ENCODE measurements at regions of chr16 and their contacts with region 1.

Region 1: GRCh38 chr16:71723537-71724319 is 773 bp downstream of the PHLPP2 start:
- DNase-seq: peak; percentile 81 to 93 (median 88)
- ATAC-seq: peak; percentile 93
- H3K4me3 ChIP-seq: peak overlapping the region; percentile 79
- H3K4me3 Mint-ChIP-seq: peak overlapping the region; percentile 80 to 97 (median 86)
- H3K27ac ChIP-seq: peak overlapping the region; percentile 79
- H3K27ac Mint-ChIP-seq: peak overlapping the region in 8 of 9 donors; percentile 30 to 92 (median 78)
- H3K4me1 ChIP-seq: peaks cover 9% of the 10 kb centered on the region in 2 donors
- H3K4me1 Mint-ChIP-seq: peaks cover 7 to 20% (median 19%) of the 10 kb centered on the region in 7 donors
- H3K27me3 ChIP-seq: no peaks in the 10 kb centered on the region
- H3K27me3 Mint-ChIP-seq: peaks cover 0 to 17% (median 0%) of the 10 kb centered on the region in 5 donors

Region 2: GRCh38 chr16:70800781-70801530 is 922.8 kb before region 1 on chr16 and contains the start of gene VAC14:
- CTCF ChIA-PET with region 1: no interaction called
- POLR2A ChIA-PET with region 1: no interaction called
- intact Hi-C with region 1: loop called in 1 of 2 experiments (anchors 5 kb)
- DNase-seq: peak; percentile 96 to 99 (median 97)
- ATAC-seq: peak; percentile 99
- H3K4me3 ChIP-seq: peak within 1 kb of the TSS; percentile 90
- H3K4me3 Mint-ChIP-seq: peak within 1 kb of the TSS; percentile 90 to 98 (median 94)
- H3K27ac ChIP-seq: peak within 1 kb of the TSS; percentile 78
- H3K27ac Mint-ChIP-seq: peak within 1 kb of the TSS; percentile 84 to 95 (median 92)
- H3K4me1 ChIP-seq: peaks cover 11 to 17% of the 10 kb centered on the region in 2 donors
- H3K4me1 Mint-ChIP-seq: peaks cover 19 to 49% (median 44%) of the 10 kb centered on the region in 7 donors
- H3K27me3 ChIP-seq: no peaks in the 10 kb centered on the region
- H3K27me3 Mint-ChIP-seq: peaks cover 0 to 15% (median 0%) of the 10 kb centered on the region in 5 donors
- total RNA-seq, gene VAC14: 36.7 to 47.1 (median 45.9) TPM

Region 3: GRCh38 chr16:71461686-71462648 is 261.8 kb before region 1 on chr16 and contains the start of gene ZNF23:
- CTCF ChIA-PET with region 1: no interaction called
- POLR2A ChIA-PET with region 1: no interaction called
- intact Hi-C with region 1: loop called in 1 of 2 experiments (anchors 10 kb)
- DNase-seq: peak; percentile 53 to 84 (median 72)
- ATAC-seq: peak; percentile 99
- H3K4me3 ChIP-seq: peak within 1 kb of the TSS; percentile 92
- H3K4me3 Mint-ChIP-seq: peak within 1 kb of the TSS; percentile 88 to 97 (median 94)
- H3K27ac ChIP-seq: peak within 1 kb of the TSS; percentile 87
- H3K27ac Mint-ChIP-seq: peak within 1 kb of the TSS; percentile 85 to 98 (median 92)
- H3K4me1 ChIP-seq: peaks cover 4 to 6% of the 10 kb centered on the region in 2 donors
- H3K4me1 Mint-ChIP-seq: peaks cover 13 to 39% (median 27%) of the 10 kb centered on the region in 7 donors
- H3K27me3 ChIP-seq: no peaks in the 10 kb centered on the region
- H3K27me3 Mint-ChIP-seq: no peaks in the 10 kb centered on the region
- total RNA-seq, gene ZNF23: 6.5 to 16.0 (median 8.8) TPM

Region 4: GRCh38 chr16:71526111-71526631 is 197.6 kb before region 1 on chr16 and contains the start of gene CHST4:
- CTCF ChIA-PET with region 1: no interaction called
- POLR2A ChIA-PET with region 1: no interaction called
- intact Hi-C with region 1: no loop called
- DNase-seq: no peak
- ATAC-seq: no peak
- H3K4me3 ChIP-seq: no peak within 1 kb of the TSS
- H3K4me3 Mint-ChIP-seq: no peak within 1 kb of the TSS
- H3K27ac ChIP-seq: no peak within 1 kb of the TSS
- H3K27ac Mint-ChIP-seq: no peak within 1 kb of the TSS
- H3K4me1 ChIP-seq: no peaks in the 10 kb centered on the region
- H3K4me1 Mint-ChIP-seq: no peaks in the 10 kb centered on the region
- H3K27me3 ChIP-seq: no peaks in the 10 kb centered on the region
- H3K27me3 Mint-ChIP-seq: peaks cover 12 to 47% (median 22%) of the 10 kb centered on the region in 5 donors
- total RNA-seq, gene CHST4: not detected

Region 5: GRCh38 chr16:71709231-71709781 is 14.4 kb before region 1 on chr16:
- CTCF ChIA-PET with region 1: no interaction called
- POLR2A ChIA-PET with region 1: no interaction called
- intact Hi-C with region 1: no loop called
- DNase-seq: no peak
- ATAC-seq: no peak
- H3K4me3 ChIP-seq: no peak overlapping the region
- H3K4me3 Mint-ChIP-seq: no peak overlapping the region
- H3K27ac ChIP-seq: no peak overlapping the region
- H3K27ac Mint-ChIP-seq: no peak overlapping the region
- H3K4me1 ChIP-seq: no peaks in the 10 kb centered on the region
- H3K4me1 Mint-ChIP-seq: peaks cover 0 to 10% (median 3%) of the 10 kb centered on the region in 7 donors
- H3K27me3 ChIP-seq: no peaks in the 10 kb centered on the region
- H3K27me3 Mint-ChIP-seq: no peaks in the 10 kb centered on the region

Region 6: GRCh38 chr16:71746442-71747046 is 22.8 kb after region 1 on chr16:
- CTCF ChIA-PET with region 1: no interaction called
- POLR2A ChIA-PET with region 1: no interaction called
- intact Hi-C with region 1: loop called (anchors 1 to 2 kb)
- DNase-seq: peak in 7 of 9 donors; percentile 14 to 59 (median 45)
- ATAC-seq: peak; percentile 82
- H3K4me3 ChIP-seq: no peak overlapping the region
- H3K4me3 Mint-ChIP-seq: no peak overlapping the region
- H3K27ac ChIP-seq: no peak overlapping the region
- H3K27ac Mint-ChIP-seq: peak overlapping the region in 1 of 9 donors; percentile 14
- H3K4me1 ChIP-seq: no peaks in the 10 kb centered on the region
- H3K4me1 Mint-ChIP-seq: peaks cover 0 to 5% (median 0%) of the 10 kb centered on the region in 7 donors
- H3K27me3 ChIP-seq: no peaks in the 10 kb centered on the region
- H3K27me3 Mint-ChIP-seq: no peaks in the 10 kb centered on the region

Region 7: DNA sequence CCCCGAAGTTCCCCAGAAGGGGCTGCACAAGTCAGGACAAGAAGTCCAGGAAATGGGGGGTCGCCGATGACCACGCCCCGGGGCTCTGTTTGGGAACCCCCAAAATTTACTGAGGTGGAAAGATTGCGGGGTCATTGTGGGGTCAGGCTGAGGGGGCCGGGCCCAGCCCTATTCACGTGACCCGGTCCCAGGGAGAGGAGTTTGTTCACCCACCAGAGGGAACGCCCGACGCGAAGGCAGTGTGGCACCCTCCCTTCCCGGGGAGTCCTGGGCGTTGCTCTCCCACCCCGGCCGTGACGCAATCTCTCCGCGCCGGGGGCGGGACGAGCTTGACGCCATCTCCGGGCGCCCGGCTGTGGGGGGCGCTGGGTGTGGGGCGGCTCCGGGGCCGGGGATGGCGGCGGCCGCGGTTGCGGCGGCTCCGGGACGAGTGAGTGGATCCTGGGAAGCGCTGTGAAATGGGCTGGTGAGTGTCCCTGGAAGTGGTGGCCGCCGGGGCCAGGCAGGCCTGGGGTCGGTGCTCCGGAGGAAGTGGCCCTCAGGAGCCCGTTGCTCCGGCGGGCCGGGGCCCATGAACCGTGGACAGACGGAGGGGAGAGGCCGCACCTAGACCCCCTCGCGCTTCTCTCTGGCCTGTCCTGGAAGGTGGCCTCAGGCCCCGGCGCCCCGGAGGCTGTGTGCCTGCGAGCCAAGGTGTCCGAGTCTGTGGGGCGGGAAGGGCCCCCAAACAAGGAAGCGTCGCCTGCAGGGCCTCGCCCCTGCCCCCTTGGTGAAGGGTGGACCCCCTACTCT is 122.1 kb after region 1 on chr16 and contains the start of gene ATXN1L:
- CTCF ChIA-PET with region 1: no interaction called
- POLR2A ChIA-PET with region 1: no interaction called
- intact Hi-C with region 1: loop called (anchors 1 kb)
- DNase-seq: peak; percentile 91 to 100 (median 95)
- ATAC-seq: peak; percentile 97
- H3K4me3 ChIP-seq: peak within 1 kb of the TSS; percentile 97
- H3K4me3 Mint-ChIP-seq: peak within 1 kb of the TSS; percentile 92 to 96 (median 94)
- H3K27ac ChIP-seq: peak within 1 kb of the TSS; percentile 92
- H3K27ac Mint-ChIP-seq: peak within 1 kb of the TSS; percentile 95 to 98 (median 97)
- H3K4me1 ChIP-seq: peaks cover 10 to 16% of the 10 kb centered on the region in 2 donors
- H3K4me1 Mint-ChIP-seq: peaks cover 18 to 50% (median 42%) of the 10 kb centered on the region in 7 donors
- H3K27me3 ChIP-seq: no peaks in the 10 kb centered on the region
- H3K27me3 Mint-ChIP-seq: no peaks in the 10 kb centered on the region
- total RNA-seq, gene ATXN1L: 24.6 to 52.9 (median 30.7) TPM

Region 8: DNA sequence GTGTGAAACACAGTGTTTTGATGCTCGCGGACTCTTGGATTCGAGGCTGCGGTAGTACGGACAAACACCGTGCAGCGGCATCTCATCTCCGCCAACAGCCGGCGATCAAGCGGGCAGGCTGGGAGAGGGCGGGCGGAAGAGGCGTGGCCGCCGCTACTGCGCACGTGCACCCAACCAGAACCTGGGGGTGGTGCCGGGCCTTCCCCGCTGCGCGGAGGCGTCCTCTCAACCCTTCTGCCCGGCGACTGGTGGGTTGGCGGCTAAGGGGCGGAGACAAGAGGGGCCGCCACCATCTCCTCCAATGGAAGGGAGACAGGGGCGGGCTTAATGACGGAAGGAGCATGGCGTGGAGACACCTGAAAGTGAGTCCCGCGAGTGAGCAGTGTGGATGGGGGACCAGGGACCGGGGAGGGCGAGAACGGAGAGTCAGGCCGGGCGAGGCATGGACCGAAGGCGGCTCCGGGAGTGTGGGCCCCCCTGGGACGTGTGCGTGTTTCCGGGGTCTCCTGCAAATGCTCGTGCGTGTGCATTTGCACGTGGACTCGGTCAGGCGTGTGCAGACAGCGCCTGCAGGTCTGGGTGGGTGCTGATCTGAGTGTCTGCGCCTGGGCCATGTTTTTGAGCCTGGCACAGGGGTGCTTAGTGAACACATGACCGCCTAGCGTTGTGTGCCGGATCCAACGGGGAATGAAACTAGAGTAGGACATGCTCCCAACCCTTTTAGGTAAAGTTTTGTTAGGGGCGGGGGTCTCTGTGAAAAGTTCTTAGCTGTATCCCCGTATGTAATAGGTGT is 284.9 kb after region 1 on chr16 and contains the start of gene DHODH:
- CTCF ChIA-PET with region 1: no interaction called
- POLR2A ChIA-PET with region 1: no interaction called
- intact Hi-C with region 1: loop called (anchors 1 to 2 kb)
- DNase-seq: peak; percentile 92 to 99 (median 97)
- ATAC-seq: peak; percentile 100
- H3K4me3 ChIP-seq: peak within 1 kb of the TSS; percentile 100
- H3K4me3 Mint-ChIP-seq: peak within 1 kb of the TSS; percentile 92 to 100 (median 98)
- H3K27ac ChIP-seq: peak within 1 kb of the TSS; percentile 62
- H3K27ac Mint-ChIP-seq: peak within 1 kb of the TSS; percentile 75 to 96 (median 89)
- H3K4me1 ChIP-seq: no peaks in the 10 kb centered on the region
- H3K4me1 Mint-ChIP-seq: peaks cover 9 to 22% (median 16%) of the 10 kb centered on the region in 7 donors
- H3K27me3 ChIP-seq: no peaks in the 10 kb centered on the region
- H3K27me3 Mint-ChIP-seq: peaks cover 0 to 3% (median 0%) of the 10 kb centered on the region in 5 donors
- total RNA-seq, gene DHODH: 4.9 to 15.6 (median 14.0) TPM

Region 9: DNA sequence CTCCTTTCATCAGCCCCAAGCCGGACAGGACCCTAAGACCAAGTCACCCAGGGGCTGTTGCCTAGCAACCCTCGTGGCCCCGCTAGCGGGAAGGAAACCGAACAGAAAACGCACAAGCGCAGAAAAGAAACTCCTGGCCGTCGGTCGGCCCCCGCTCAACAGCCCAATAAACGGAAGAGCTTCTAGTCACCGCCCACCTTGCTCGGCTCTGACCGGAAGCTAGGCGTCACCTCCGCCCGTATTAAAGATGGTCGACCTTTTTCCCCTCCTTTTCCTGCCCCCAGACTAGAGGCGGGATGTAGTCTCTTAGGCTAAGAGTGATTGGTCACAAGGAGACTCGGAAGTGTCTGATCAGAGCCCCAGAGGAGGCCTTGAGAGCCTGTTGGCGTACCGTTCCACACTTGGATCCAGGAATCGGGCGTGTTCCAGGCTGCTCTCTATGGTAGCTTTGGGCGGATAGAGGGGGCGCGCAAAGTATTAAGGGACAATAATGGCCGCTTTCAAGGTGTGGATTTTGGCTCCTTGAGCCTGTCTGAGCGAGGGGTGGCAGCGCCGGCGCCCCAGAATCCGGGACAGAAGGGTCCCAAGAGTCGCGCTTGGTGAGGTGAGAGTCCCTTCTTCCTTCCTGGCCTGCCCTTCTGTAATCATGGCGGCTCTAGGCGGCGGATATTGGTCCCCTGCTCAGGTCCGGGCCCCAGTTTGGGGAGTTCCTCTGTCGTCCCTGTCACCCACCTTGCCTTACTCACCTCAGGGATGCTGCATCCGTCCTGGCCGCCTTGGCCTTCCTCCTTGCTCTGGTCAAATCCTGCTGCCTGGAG is 369.9 kb after region 1 on chr16 and contains the starts of genes DHX38 and TXNL4B:
- CTCF ChIA-PET with region 1: no interaction called
- POLR2A ChIA-PET with region 1: no interaction called
- intact Hi-C with region 1: loop called (anchors 1 kb)
- DNase-seq: peak; percentile 70 to 95 (median 92)
- ATAC-seq: peak; percentile 98
- H3K4me3 ChIP-seq: peak within 1 kb of the TSS; percentile 86
- H3K4me3 Mint-ChIP-seq: peak within 1 kb of the TSS; percentile 94 to 100 (median 98)
- H3K27ac ChIP-seq: peak within 1 kb of the TSS; percentile 93
- H3K27ac Mint-ChIP-seq: peak within 1 kb of the TSS; percentile 92 to 100 (median 99)
- H3K4me1 ChIP-seq: peaks cover 21 to 24% of the 10 kb centered on the region in 2 donors
- H3K4me1 Mint-ChIP-seq: peaks cover 33 to 70% (median 63%) of the 10 kb centered on the region in 7 donors
- H3K27me3 ChIP-seq: no peaks in the 10 kb centered on the region
- H3K27me3 Mint-ChIP-seq: no peaks in the 10 kb centered on the region
- total RNA-seq, gene DHX38: 90.1 to 113 (median 104) TPM
- total RNA-seq, gene TXNL4B: 12.5 to 20.9 (median 18.5) TPM

Measured in naive thymus-derived CD4-positive, alpha-beta T cell (primary cell).